SK-N-SH (cell line): ENCODE measurements at regions of chr3 and their contacts with region 1.

Region 1: DNA sequence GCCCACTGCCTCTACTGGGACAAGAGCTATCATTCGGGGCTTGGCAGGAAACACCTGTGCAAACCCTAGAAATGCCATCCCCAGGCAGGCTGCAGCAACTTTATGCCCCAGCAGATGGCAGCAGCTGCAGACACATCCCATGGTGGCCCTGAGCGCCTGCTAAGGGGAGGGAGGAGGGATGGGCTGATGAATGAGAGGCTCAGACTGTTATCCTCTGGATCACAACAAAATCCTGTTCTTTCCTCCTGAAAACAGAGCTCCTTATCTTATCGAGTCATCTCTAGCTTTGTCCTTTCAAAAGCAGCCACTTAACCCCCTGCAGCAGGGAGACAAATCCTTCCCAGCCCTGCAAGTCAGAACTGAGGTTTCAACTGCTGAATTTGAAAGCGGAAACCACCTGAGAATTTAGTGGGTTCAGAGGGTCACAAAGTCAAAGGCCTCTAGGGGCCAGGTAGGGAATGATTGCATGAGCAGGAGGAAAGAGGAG is 90.6 kb upstream of the PROK2 start:
- DNase-seq: peak; percentile 84
- H3K4me3 ChIP-seq: no peak overlapping the region; a peak in 1 of 4 replicates
- H3K27ac ChIP-seq: no peak overlapping the region; a peak in 1 of 4 replicates
- H3K4me1 ChIP-seq: peaks cover 0 to 11% of the 10 kb centered on the region in 2 experiments; a peak in 1 of 4 replicates
- H3K27me3 ChIP-seq: peaks cover 6% of the 10 kb centered on the region; the same call in 1 of the 2 replicates
- CTCF ChIP-seq: peak; percentile 85
- EP300 ChIP-seq: peak in 1 of 2 experiments; percentile 86; a peak in 2 of 4 replicates
- RAD21 ChIP-seq: peak; percentile 97

Region 2: DNA sequence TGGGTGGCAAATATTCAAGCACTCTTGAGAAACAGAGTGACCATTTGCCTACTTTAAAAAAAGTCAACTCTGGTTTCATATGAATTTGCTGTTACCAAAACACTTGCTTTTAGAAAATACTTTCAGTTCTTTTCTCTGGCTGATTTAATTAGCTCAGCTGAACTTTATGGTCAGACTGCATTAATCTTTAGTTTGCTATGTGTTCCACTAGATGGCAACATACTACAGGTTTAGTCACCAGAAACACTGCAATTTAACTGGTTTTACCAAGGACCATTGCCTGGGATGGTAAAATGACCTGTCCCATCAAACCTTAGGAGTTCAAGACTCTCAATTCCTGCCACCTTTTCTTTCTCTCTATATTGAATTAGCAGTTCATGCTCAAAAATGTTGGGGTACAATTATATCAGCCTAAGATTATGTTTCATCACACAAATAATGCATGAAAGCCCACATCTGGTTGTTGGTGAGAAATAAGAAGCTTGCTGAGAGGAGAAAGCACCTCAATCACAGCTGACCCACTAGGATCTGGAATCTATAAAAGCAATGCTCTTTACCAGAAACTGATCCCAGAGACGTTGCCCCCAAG is 164.5 kb before region 1 on chr3:
- CTCF ChIA-PET with region 1: interaction called, 10 read pairs
- POLR2A ChIA-PET with region 1: no interaction called
- DNase-seq: peak; percentile 72
- H3K4me3 ChIP-seq: no peak overlapping the region; a peak in 1 of 4 replicates
- H3K27ac ChIP-seq: no peak overlapping the region
- H3K4me1 ChIP-seq: no peaks in the 10 kb centered on the region; a peak in 1 of 4 replicates
- H3K27me3 ChIP-seq: no peaks in the 10 kb centered on the region
- CTCF ChIP-seq: peak; percentile 79
- EP300 ChIP-seq: no peak
- RAD21 ChIP-seq: peak; percentile 93

Region 3: GRCh38 chr3:71846185-71846584 is 29.3 kb before region 1 on chr3:
- CTCF ChIA-PET with region 1: no interaction called
- POLR2A ChIA-PET with region 1: no interaction called
- DNase-seq: no peak
- H3K4me3 ChIP-seq: no peak overlapping the region
- H3K27ac ChIP-seq: no peak overlapping the region
- H3K4me1 ChIP-seq: no peaks in the 10 kb centered on the region; a peak in 1 of 4 replicates
- H3K27me3 ChIP-seq: no peaks in the 10 kb centered on the region
- CTCF ChIP-seq: no peak
- EP300 ChIP-seq: no peak
- RAD21 ChIP-seq: no peak

Region 4: GRCh38 chr3:71887256-71887655 is 11.8 kb after region 1 on chr3:
- CTCF ChIA-PET with region 1: interaction called, 44 read pairs
- POLR2A ChIA-PET with region 1: no interaction called
- DNase-seq: no peak
- H3K4me3 ChIP-seq: no peak overlapping the region
- H3K27ac ChIP-seq: no peak overlapping the region
- H3K4me1 ChIP-seq: no peaks in the 10 kb centered on the region; a peak in 1 of 4 replicates
- H3K27me3 ChIP-seq: no peaks in the 10 kb centered on the region
- CTCF ChIP-seq: no peak
- EP300 ChIP-seq: no peak
- RAD21 ChIP-seq: no peak

Region 5: DNA sequence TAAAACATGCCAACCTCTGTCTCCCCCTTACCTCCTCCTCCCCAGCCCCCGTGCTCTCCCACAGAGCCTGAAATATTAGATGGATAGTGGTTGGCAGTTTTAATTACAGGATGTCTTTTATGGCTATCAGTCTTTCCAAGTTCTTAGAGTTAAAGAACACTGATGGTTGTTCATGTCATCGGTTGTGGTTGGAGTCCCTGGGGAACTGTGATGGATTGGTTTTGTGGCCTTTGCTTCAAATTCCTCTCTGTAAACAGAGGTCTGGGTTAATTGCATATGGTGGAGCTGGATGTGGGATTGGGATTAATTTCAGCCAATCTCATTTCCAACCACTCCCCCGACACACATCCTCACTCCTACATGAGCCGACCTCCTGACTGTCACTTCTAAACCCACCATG is 73.9 kb after region 1 on chr3:
- CTCF ChIA-PET with region 1: interaction called, 44 read pairs
- POLR2A ChIA-PET with region 1: no interaction called
- DNase-seq: no peak
- H3K4me3 ChIP-seq: no peak overlapping the region
- H3K27ac ChIP-seq: no peak overlapping the region
- H3K4me1 ChIP-seq: peaks cover 0 to under 1% of the 10 kb centered on the region in 2 experiments; a peak in 1 of 4 replicates
- H3K27me3 ChIP-seq: no peaks in the 10 kb centered on the region; the same call in 1 of the 2 replicates
- CTCF ChIP-seq: no peak
- EP300 ChIP-seq: no peak
- RAD21 ChIP-seq: no peak

Region 6: GRCh38 chr3:72041511-72041910 is 166.0 kb after region 1 on chr3:
- CTCF ChIA-PET with region 1: no interaction called
- POLR2A ChIA-PET with region 1: no interaction called
- DNase-seq: no peak
- H3K4me3 ChIP-seq: no peak overlapping the region
- H3K27ac ChIP-seq: no peak overlapping the region
- H3K4me1 ChIP-seq: peaks cover 0 to 4% of the 10 kb centered on the region in 2 experiments; a peak in 1 of 4 replicates
- H3K27me3 ChIP-seq: no peaks in the 10 kb centered on the region
- CTCF ChIP-seq: no peak
- EP300 ChIP-seq: no peak
- RAD21 ChIP-seq: peak; percentile 42

Region 7: GRCh38 chr3:72818092-72818773 is 942.7 kb after region 1 on chr3:
- CTCF ChIA-PET with region 1: interaction called, 77 read pairs
- POLR2A ChIA-PET with region 1: no interaction called
- DNase-seq: peak; percentile 54
- H3K4me3 ChIP-seq: no peak overlapping the region; a peak in 1 of 4 replicates
- H3K27ac ChIP-seq: peak overlapping the region in 1 of 2 experiments; percentile 61; a peak in 3 of 4 replicates
- H3K4me1 ChIP-seq: peaks cover 21 to 25% of the 10 kb centered on the region in 2 experiments
- H3K27me3 ChIP-seq: no peaks in the 10 kb centered on the region
- CTCF ChIP-seq: peak; percentile 67
- EP300 ChIP-seq: 0 out of 4 replicates have a peak, but pooled peaks of 1 of the 2 experiments have one; percentile 10
- RAD21 ChIP-seq: peak; percentile 95